GM23248 (cell line): ENCODE measurements at regions of chr16 and their contacts with region 1.

Region 1: DNA sequence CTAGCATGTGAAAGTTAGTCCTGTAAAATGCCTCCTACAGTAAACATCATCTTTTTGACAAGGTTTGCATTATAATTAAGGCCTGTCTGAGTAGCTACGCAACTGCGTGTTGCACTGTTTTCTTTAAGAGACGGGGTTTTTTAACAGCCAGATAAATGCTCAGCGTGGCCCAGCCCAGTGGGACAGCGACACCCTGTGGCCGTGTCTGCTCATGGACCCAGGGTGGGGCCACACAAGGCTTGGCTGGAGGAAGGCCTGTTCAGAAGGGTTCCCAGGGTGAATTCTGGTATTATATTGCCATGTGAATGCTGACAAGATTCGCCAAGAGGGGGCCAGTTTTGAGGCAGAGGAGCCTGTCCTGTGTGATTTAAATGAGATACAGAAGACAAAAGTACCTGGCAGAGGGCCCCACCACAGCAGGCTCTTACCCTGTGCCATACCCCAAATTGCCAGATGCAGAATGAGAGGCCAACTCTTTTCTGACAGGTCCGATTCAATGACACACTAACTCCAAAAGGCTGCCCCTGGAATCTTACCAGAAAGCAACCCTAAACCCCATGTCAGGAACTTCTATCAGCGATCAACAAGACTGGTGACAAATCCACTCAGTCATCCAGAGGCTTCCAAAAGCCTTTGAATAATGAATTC is 65.9 kb upstream of the IRX6 start:
- DNase-seq: peak; percentile 80
- H3K4me3 ChIP-seq: peak overlapping the region; percentile 34; the same call in 1 of the 2 replicates
- H3K27ac ChIP-seq: no peak overlapping the region
- H3K4me1 ChIP-seq: no peaks in the 10 kb centered on the region
- H3K27me3 ChIP-seq: no peaks in the 10 kb centered on the region; the same call in 1 of the 2 replicates

Region 2: GRCh38 chr16:53549970-53550690 is 1708.0 kb before region 1 on chr16:
- in situ Hi-C with region 1: loop called (anchors 25 kb)
- DNase-seq: peak; percentile 93
- H3K4me3 ChIP-seq: peak overlapping the region; percentile 42
- H3K27ac ChIP-seq: no peak overlapping the region
- H3K4me1 ChIP-seq: peaks cover 6% of the 10 kb centered on the region
- H3K27me3 ChIP-seq: peaks cover 11% of the 10 kb centered on the region; the same call in 1 of the 2 replicates

Region 3: DNA sequence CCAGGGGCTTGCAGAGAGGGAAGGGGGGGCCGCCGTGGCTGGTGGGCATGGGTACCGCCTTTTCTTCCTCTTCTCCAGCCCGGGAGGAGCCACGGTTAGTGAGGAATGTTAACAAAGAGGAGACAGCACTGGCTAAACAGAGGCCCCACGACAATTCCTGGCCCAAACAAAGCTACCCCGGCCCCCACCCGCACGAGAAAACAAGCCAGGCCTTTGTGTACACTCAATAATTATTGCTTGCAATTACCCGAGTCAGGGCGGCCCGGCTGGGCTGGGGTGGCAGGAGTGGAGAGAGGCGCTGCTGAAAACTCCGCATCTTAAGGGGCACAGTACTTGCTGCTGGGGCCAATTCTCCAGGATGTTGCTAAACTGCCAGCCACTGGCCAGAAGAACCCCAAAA is 271.0 kb before region 1 on chr16:
- in situ Hi-C with region 1: no loop called
- DNase-seq: no peak
- H3K4me3 ChIP-seq: no peak overlapping the region
- H3K27ac ChIP-seq: no peak overlapping the region
- H3K4me1 ChIP-seq: no peaks in the 10 kb centered on the region
- H3K27me3 ChIP-seq: no peaks in the 10 kb centered on the region; the same call in 1 of the 2 replicates